ENCODE measurements at regions of chr17 and their contacts with region 1.

Region 1: DNA sequence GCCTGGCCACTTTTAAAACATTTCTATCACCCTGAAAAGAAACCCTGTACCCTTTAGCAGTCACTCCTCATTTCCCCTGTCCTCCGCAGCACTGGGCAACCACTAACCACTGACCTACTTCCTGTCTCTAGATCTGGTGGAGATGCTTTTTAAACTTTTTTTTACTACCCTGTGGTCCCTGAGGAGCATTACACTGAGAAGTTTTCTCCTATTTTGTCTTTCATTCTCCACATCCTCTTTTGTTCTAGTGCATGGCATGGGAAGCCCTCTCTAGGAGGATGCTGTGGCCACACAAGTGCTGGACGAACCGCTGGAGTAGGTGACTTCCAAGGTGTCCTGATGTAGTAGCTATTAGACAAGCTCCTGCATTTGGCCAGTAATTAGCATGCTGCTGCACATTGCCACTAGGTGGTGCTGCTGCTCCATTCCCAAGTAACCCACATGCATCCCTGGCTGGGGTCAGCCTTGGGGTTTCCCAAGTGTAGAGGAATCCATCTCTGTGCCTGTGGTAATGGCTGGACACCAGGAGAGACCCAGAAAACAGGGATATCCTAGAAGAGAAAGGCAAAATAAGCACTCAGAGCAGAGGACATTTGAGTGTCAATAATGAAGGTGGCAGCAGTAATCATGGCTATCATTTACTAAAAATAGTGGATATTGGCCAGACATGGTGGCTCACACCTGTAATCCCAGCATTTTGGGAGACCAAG is 143.8 kb upstream of the CRHR1 start:
- DNase-seq: peak; percentile 76
- ATAC-seq: peak; percentile 62
- H3K4me3 ChIP-seq: no peak overlapping the region
- H3K4me3 Mint-ChIP-seq: no peak overlapping the region
- H3K27ac ChIP-seq: no peak overlapping the region
- H3K27ac Mint-ChIP-seq: peak overlapping the region; percentile 26
- H3K4me1 ChIP-seq: no peaks in the 10 kb centered on the region
- H3K4me1 Mint-ChIP-seq: no peaks in the 10 kb centered on the region
- H3K27me3 ChIP-seq: no peaks in the 10 kb centered on the region
- H3K27me3 Mint-ChIP-seq: no peaks in the 10 kb centered on the region
- CTCF ChIP-seq: peak; percentile 99

Region 2: DNA sequence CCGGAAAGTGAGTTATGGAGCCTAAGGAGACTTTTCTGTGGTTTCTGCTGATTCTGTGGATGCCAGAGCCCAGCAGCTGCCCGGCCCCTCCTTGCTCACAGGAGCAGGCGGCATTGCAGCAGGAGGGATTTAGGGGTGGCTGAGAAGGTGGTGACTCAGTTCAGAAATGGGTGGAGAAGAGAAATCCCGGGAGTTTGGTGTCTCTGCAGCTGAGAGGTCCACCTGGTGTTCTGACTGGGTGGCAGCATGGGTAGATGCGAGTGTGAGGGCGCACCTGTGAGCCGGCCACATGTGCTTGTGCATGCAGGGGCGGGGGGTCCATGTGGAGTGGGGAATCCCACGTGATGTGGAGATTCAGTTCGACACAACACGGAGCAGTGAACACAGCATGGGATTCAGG is 188.3 kb after region 1 on chr17:
- CTCF ChIA-PET with region 1: interaction called, 115 read pairs
- POLR2A ChIA-PET with region 1: no interaction called
- intact Hi-C with region 1: no loop called
- DNase-seq: no peak
- ATAC-seq: no peak
- H3K4me3 ChIP-seq: no peak overlapping the region
- H3K4me3 Mint-ChIP-seq: no peak overlapping the region
- H3K27ac ChIP-seq: no peak overlapping the region
- H3K27ac Mint-ChIP-seq: no peak overlapping the region
- H3K4me1 ChIP-seq: no peaks in the 10 kb centered on the region
- H3K4me1 Mint-ChIP-seq: no peaks in the 10 kb centered on the region
- H3K27me3 ChIP-seq: peaks cover 0 to 9% (median 0%) of the 10 kb centered on the region in 4 experiments
- H3K27me3 Mint-ChIP-seq: peaks cover 7% of the 10 kb centered on the region
- CTCF ChIP-seq: no peak

Region 3: DNA sequence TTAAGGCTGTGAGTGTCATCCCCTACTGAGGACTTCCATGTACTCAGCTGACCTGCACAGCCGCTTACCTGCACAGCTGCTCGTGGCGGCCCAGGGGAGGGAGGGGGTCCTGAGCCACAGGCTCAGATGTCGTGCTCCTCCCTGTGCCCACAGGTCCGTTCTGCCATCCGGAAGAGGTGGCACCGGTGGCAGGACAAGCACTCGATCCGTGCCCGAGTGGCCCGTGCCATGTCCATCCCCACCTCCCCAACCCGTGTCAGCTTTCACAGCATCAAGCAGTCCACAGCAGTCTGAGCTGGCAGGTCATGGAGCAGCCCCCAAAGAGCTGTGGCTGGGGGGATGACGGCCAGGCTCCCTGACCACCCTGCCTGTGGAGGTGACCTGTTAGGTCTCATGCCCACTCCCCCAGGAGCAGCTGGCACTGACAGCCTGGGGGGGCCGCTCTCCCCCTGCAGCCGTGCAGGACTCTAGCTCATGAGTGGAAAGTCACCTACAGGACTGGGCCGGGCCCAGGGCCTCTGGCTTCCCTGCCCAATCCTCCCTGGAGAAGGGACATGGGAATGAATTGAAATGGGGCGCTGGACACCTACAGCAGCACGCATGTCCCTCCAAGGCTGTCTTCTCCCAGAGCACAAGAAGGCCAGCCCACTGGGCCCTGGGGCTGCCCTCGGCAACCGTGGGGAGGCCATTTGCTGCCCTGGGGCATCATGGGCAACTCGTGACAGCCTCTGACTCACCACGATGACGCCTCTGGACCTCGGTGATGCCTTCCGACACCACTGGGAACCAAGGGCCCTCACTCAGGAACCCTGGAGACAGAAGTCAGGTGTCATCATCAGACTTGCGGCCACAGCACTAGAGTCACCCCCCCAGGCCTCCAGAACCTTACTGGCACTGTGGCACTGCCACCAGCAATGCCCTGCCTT is 194.4 kb after region 1 on chr17:
- CTCF ChIA-PET with region 1: interaction called, 115 read pairs
- POLR2A ChIA-PET with region 1: no interaction called
- intact Hi-C with region 1: no loop called
- DNase-seq: no peak
- ATAC-seq: no peak
- H3K4me3 ChIP-seq: no peak overlapping the region
- H3K4me3 Mint-ChIP-seq: no peak overlapping the region
- H3K27ac ChIP-seq: no peak overlapping the region
- H3K27ac Mint-ChIP-seq: no peak overlapping the region
- H3K4me1 ChIP-seq: no peaks in the 10 kb centered on the region
- H3K4me1 Mint-ChIP-seq: no peaks in the 10 kb centered on the region
- H3K27me3 ChIP-seq: peaks cover 0 to 6% (median 0%) of the 10 kb centered on the region in 4 experiments
- H3K27me3 Mint-ChIP-seq: peaks cover 9% of the 10 kb centered on the region
- CTCF ChIP-seq: no peak